Endothelial cell of umbilical vein (primary cell): ENCODE measurements at regions of chr13 and their contacts with region 1.

Region 1: DNA sequence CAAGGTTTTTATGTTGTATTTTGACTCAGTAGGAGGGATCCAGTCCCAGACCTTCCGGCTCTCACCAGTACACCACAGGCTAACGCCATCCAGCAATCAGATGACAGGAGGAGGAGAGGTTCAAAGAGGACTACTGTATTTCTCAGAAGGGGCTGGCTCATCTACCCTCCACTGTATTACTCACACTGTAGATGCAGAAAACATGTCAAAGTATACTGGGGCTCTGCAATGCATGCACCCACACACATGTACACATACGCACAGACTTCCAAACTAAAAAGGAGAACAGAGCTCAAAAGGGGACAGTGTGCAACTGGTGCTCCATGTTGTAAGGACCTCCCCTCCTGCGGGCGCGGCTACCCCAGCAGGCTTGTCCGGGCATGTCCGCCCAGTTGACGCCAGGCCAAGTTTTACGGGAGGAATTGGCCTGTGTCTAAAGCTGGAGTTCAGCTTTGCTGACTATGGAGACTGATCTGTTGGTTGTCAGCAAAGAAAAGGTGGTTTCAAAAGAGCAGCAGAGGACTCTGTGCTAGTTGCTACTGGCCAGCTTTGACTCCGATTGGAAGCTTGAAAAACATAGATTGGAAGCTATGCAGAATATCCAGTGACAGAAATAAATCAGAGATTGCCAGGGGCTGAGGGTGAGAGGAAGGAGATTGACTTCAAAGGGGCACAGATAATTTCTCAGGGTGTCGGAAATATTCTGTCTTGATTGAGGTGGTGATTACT is 314.2 kb downstream of the DLEU7 start:
- DNase-seq: peak; percentile 81
- H3K4me3 ChIP-seq: no peak overlapping the region
- H3K27ac ChIP-seq: peak overlapping the region; percentile 39
- H3K4me1 ChIP-seq: peaks cover 8% of the 10 kb centered on the region
- H3K27me3 ChIP-seq: no peaks in the 10 kb centered on the region
- CTCF ChIP-seq: no peak
- POLR2A ChIP-seq: no peak

Region 2: DNA sequence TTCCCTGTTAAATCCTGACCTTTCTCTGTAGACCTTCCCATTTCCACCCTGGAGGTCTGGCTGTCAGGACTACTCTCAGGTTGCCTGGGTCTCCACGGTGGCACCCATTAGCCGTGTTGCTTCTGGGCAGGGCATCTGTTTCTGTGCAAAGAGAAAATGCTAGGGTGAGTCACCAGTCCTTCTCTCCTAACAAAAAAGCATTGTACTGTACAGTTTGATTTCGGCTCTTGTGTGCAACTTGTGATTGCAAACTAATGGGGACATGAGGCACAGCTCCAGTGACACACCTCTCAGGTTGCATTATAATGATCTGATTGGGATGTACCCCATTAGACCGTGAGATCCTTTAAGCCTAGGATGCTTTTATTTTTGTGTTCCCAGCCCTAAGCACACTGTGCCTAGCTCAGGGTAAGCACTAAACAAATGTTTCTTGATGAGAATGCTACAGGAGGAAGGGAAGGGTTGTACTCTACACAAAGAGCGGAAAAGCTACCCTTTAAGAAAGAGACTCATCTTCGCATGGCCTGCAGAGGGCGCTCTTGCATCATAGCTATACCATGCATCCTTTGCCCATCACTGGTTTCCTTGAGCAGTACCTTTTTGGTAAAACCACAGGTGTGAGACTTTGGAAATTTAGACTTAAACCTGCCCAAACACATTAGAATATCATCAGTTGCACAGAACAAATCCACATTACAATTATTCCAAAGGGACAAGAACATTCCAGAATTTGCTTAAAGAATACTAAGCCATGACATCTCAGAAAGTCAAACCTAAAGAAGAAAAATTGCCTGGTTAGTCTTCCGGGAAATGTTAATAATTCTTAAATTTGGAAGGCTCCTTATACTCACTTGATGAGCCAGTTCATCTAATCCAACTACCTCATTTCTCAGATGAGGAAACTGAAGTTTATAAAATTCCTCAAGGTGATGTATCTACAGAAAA is 552.7 kb before region 1 on chr13:
- CTCF ChIA-PET with region 1: interaction called, 9 read pairs
- POLR2A ChIA-PET with region 1: no interaction called
- dilution Hi-C with region 1: no loop called
- intact Hi-C with region 1: loop called (anchors 1 kb)
- DNase-seq: peak; percentile 77
- H3K4me3 ChIP-seq: no peak overlapping the region
- H3K27ac ChIP-seq: no peak overlapping the region
- H3K4me1 ChIP-seq: no peaks in the 10 kb centered on the region
- H3K27me3 ChIP-seq: no peaks in the 10 kb centered on the region
- CTCF ChIP-seq: peak; percentile 88 to 90
- POLR2A ChIP-seq: no peak

Region 3: DNA sequence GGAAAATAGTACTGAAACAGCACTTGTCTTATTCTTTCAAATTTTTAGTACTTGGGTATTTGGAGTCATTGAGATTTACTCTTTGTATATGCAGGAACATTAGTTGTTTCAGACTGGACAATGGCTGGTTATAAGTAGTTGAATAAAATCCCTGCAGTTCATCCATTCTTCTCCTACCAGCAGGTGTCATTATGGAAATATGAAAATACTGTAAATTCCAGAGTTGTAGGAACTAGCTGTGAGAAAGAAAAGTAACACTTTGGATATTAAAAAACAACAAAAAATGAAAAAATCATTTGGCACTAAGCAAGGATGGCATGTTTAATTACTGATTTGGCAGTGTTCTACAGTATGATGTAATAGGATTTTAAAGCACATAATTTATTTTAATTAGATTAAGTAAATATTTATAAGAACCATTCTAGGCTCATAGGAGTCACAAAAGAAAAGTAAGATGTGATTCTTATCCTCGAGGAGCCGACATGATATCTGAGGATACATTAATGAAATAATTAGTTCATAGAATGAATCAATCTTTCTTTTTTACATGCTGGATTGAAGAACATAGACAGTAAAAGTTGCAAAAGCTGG is 358.8 kb before region 1 on chr13:
- CTCF ChIA-PET with region 1: interaction called, 12 read pairs
- POLR2A ChIA-PET with region 1: no interaction called
- dilution Hi-C with region 1: no loop called
- intact Hi-C with region 1: loop called (anchors 1 kb)
- DNase-seq: peak; percentile 69
- H3K4me3 ChIP-seq: no peak overlapping the region
- H3K27ac ChIP-seq: no peak overlapping the region
- H3K4me1 ChIP-seq: no peaks in the 10 kb centered on the region
- H3K27me3 ChIP-seq: no peaks in the 10 kb centered on the region
- CTCF ChIP-seq: peak; percentile 8 to 24
- POLR2A ChIP-seq: no peak

Region 4: DNA sequence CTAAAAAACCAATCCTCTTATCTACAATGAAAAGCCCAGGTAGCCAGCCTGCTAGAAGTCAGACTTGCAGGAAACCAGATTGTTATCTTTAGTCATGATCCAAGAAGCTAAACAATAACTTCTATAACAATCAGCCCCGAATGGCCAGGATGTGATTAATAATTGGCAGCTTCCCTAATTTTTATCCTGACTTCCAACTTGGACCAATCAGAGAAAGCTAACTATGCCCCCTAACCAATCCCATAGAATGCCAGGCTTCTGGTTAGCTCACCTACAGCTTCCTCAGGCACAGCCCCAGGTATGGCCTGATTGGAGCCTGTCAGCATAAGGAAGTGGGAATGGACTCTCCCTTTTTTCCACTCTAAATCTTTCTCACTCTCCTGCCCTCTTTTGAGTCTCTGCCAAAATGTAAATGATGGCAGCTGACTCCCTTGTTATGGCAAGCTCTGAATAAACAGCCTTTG is 80.8 kb before region 1 on chr13:
- CTCF ChIA-PET with region 1: interaction called, 3 read pairs
- POLR2A ChIA-PET with region 1: no interaction called
- dilution Hi-C with region 1: no loop called
- intact Hi-C with region 1: loop called (anchors 2 kb)
- DNase-seq: peak; percentile 97
- H3K4me3 ChIP-seq: no peak overlapping the region
- H3K27ac ChIP-seq: peak overlapping the region; percentile 94
- H3K4me1 ChIP-seq: peaks cover 22% of the 10 kb centered on the region
- H3K27me3 ChIP-seq: no peaks in the 10 kb centered on the region
- CTCF ChIP-seq: no peak
- POLR2A ChIP-seq: peak; percentile 65

Region 5: GRCh38 chr13:51070005-51070649 is 540.8 kb after region 1 on chr13:
- CTCF ChIA-PET with region 1: no interaction called
- POLR2A ChIA-PET with region 1: no interaction called
- dilution Hi-C with region 1: no loop called
- intact Hi-C with region 1: loop called (anchors 10 kb)
- DNase-seq: peak; percentile 76
- H3K4me3 ChIP-seq: no peak overlapping the region
- H3K27ac ChIP-seq: no peak overlapping the region
- H3K4me1 ChIP-seq: peaks cover 11% of the 10 kb centered on the region
- H3K27me3 ChIP-seq: peaks cover 3 to 9% of the 10 kb centered on the region in 2 experiments
- CTCF ChIP-seq: peak; percentile 92 to 94
- POLR2A ChIP-seq: no peak